ENCODE measurements at regions of chr2 and their contacts with region 1.

Region 1: GRCh38 chr2:192162392-192163042 is 32.2 kb downstream of the TMEFF2 start:
- DNase-seq: peak; percentile 70
- ATAC-seq: peak; percentile 51
- H3K4me3 ChIP-seq: peak overlapping the region in 2 of 5 experiments; percentile 4 to 9
- H3K4me3 Mint-ChIP-seq: peak overlapping the region; percentile 6
- H3K27ac ChIP-seq: no peak overlapping the region
- H3K27ac Mint-ChIP-seq: no peak overlapping the region
- H3K4me1 ChIP-seq: peaks cover 8 to 12% of the 10 kb centered on the region in 2 donors
- H3K4me1 Mint-ChIP-seq: peaks cover 10% of the 10 kb centered on the region
- H3K27me3 ChIP-seq: no peaks in the 10 kb centered on the region
- H3K27me3 Mint-ChIP-seq: peaks cover 15% of the 10 kb centered on the region
- CTCF ChIP-seq: peak; percentile 91

Region 2: GRCh38 chr2:191218292-191218898 is 944.1 kb before region 1 on chr2:
- CTCF ChIA-PET with region 1: interaction called, 17 read pairs
- POLR2A ChIA-PET with region 1: no interaction called
- intact Hi-C with region 1: no loop called
- DNase-seq: peak; percentile 73
- ATAC-seq: peak; percentile 56
- H3K4me3 ChIP-seq: no peak overlapping the region
- H3K4me3 Mint-ChIP-seq: no peak overlapping the region
- H3K27ac ChIP-seq: no peak overlapping the region
- H3K27ac Mint-ChIP-seq: no peak overlapping the region
- H3K4me1 ChIP-seq: peaks cover 7 to 12% of the 10 kb centered on the region in 2 donors
- H3K4me1 Mint-ChIP-seq: peaks cover 20% of the 10 kb centered on the region
- H3K27me3 ChIP-seq: no peaks in the 10 kb centered on the region
- H3K27me3 Mint-ChIP-seq: peaks cover 3% of the 10 kb centered on the region
- CTCF ChIP-seq: peak; percentile 81

Region 3: DNA sequence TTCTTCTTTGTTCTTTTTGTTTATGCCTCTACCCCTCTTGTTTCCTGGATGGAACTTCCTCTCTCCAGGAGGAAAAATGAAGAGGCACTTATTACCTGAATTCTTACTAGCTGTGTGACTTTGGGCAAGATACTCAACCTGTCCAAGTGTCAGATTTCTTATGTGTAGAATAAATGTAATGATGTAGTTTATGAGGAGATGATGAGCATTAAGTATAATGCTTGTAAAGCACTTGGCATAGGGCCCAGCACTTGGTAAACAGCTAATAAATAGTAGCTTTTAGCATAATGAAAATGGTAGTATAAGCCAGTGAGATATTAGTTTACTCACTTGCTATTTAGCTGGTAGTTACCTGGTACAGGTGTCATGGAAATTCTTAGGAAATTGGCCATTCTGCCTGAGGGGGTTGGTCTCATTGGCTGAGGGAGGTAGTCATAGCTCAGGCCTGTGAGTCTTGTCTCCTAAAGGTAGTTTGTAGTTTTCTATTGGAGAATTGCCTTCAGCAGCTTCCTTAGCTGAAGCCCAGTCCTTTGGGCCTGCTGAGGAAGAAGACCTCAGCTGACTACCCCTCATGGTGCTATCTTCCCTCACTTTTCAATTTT is 618.0 kb before region 1 on chr2:
- CTCF ChIA-PET with region 1: interaction called, 303 read pairs
- POLR2A ChIA-PET with region 1: no interaction called
- intact Hi-C with region 1: no loop called
- DNase-seq: no peak
- ATAC-seq: no peak
- H3K4me3 ChIP-seq: no peak overlapping the region
- H3K4me3 Mint-ChIP-seq: no peak overlapping the region
- H3K27ac ChIP-seq: no peak overlapping the region
- H3K27ac Mint-ChIP-seq: no peak overlapping the region
- H3K4me1 ChIP-seq: no peaks in the 10 kb centered on the region
- H3K4me1 Mint-ChIP-seq: no peaks in the 10 kb centered on the region
- H3K27me3 ChIP-seq: peaks cover 0 to 7% (median 0%) of the 10 kb centered on the region in 4 experiments
- H3K27me3 Mint-ChIP-seq: peaks cover 14% of the 10 kb centered on the region
- CTCF ChIP-seq: no peak

Region 4: GRCh38 chr2:191560411-191560980 is 602.0 kb before region 1 on chr2:
- CTCF ChIA-PET with region 1: interaction called, 303 read pairs
- POLR2A ChIA-PET with region 1: no interaction called
- intact Hi-C with region 1: loop called (anchors 1 kb)
- DNase-seq: no peak
- ATAC-seq: no peak
- H3K4me3 ChIP-seq: no peak overlapping the region
- H3K4me3 Mint-ChIP-seq: no peak overlapping the region
- H3K27ac ChIP-seq: no peak overlapping the region
- H3K27ac Mint-ChIP-seq: no peak overlapping the region
- H3K4me1 ChIP-seq: no peaks in the 10 kb centered on the region
- H3K4me1 Mint-ChIP-seq: no peaks in the 10 kb centered on the region
- H3K27me3 ChIP-seq: peaks cover 0 to under 1% (median 0%) of the 10 kb centered on the region in 4 experiments
- H3K27me3 Mint-ChIP-seq: peaks cover 14% of the 10 kb centered on the region
- CTCF ChIP-seq: no peak

Region 5: GRCh38 chr2:191691016-191691735 is 471.3 kb before region 1 on chr2:
- CTCF ChIA-PET with region 1: interaction called, 18 read pairs
- POLR2A ChIA-PET with region 1: no interaction called
- intact Hi-C with region 1: loop called (anchors 1 kb)
- DNase-seq: peak; percentile 83
- ATAC-seq: peak; percentile 87
- H3K4me3 ChIP-seq: no peak overlapping the region
- H3K4me3 Mint-ChIP-seq: no peak overlapping the region
- H3K27ac ChIP-seq: no peak overlapping the region
- H3K27ac Mint-ChIP-seq: no peak overlapping the region
- H3K4me1 ChIP-seq: peaks cover 3 to 7% of the 10 kb centered on the region in 2 donors
- H3K4me1 Mint-ChIP-seq: peaks cover 20% of the 10 kb centered on the region
- H3K27me3 ChIP-seq: no peaks in the 10 kb centered on the region
- H3K27me3 Mint-ChIP-seq: no peaks in the 10 kb centered on the region
- CTCF ChIP-seq: peak; percentile 86

Region 6: GRCh38 chr2:191811807-191812602 is 350.5 kb before region 1 on chr2:
- CTCF ChIA-PET with region 1: interaction called, 16 read pairs
- POLR2A ChIA-PET with region 1: no interaction called
- intact Hi-C with region 1: loop called (anchors 1 kb)
- DNase-seq: peak; percentile 40
- ATAC-seq: no peak
- H3K4me3 ChIP-seq: no peak overlapping the region
- H3K4me3 Mint-ChIP-seq: no peak overlapping the region
- H3K27ac ChIP-seq: no peak overlapping the region
- H3K27ac Mint-ChIP-seq: no peak overlapping the region
- H3K4me1 ChIP-seq: no peaks in the 10 kb centered on the region
- H3K4me1 Mint-ChIP-seq: no peaks in the 10 kb centered on the region
- H3K27me3 ChIP-seq: peaks cover 0 to 3% (median 0%) of the 10 kb centered on the region in 4 experiments
- H3K27me3 Mint-ChIP-seq: peaks cover 4% of the 10 kb centered on the region
- CTCF ChIP-seq: peak; percentile 58

Region 7: GRCh38 chr2:192128655-192129054 is 33.9 kb before region 1 on chr2:
- CTCF ChIA-PET with region 1: no interaction called
- POLR2A ChIA-PET with region 1: no interaction called
- intact Hi-C with region 1: no loop called
- DNase-seq: no peak
- ATAC-seq: no peak
- H3K4me3 ChIP-seq: no peak overlapping the region
- H3K4me3 Mint-ChIP-seq: no peak overlapping the region
- H3K27ac ChIP-seq: no peak overlapping the region
- H3K27ac Mint-ChIP-seq: no peak overlapping the region
- H3K4me1 ChIP-seq: no peaks in the 10 kb centered on the region
- H3K4me1 Mint-ChIP-seq: no peaks in the 10 kb centered on the region
- H3K27me3 ChIP-seq: no peaks in the 10 kb centered on the region
- H3K27me3 Mint-ChIP-seq: peaks cover 11% of the 10 kb centered on the region
- CTCF ChIP-seq: no peak

Measured in B cell (primary cell).